AG04449 (cell line): ENCODE measurements at regions of chr11 and their contacts with region 1.

Region 1: GRCh38 chr11:18721561-18722292 is 4.3 kb downstream of the IGSF22 start:
- DNase-seq: no peak
- H3K4me3 ChIP-seq: peak overlapping the region; percentile 62
- CTCF ChIP-seq: peak; percentile 65

Region 2: GRCh38 chr11:18540207-18541009 is 181.3 kb before region 1 on chr11:
- CTCF ChIA-PET with region 1: interaction called, 24 read pairs
- POLR2A ChIA-PET with region 1: no interaction called
- DNase-seq: no peak
- H3K4me3 ChIP-seq: no peak overlapping the region
- CTCF ChIP-seq: peak; percentile 14

Region 3: DNA sequence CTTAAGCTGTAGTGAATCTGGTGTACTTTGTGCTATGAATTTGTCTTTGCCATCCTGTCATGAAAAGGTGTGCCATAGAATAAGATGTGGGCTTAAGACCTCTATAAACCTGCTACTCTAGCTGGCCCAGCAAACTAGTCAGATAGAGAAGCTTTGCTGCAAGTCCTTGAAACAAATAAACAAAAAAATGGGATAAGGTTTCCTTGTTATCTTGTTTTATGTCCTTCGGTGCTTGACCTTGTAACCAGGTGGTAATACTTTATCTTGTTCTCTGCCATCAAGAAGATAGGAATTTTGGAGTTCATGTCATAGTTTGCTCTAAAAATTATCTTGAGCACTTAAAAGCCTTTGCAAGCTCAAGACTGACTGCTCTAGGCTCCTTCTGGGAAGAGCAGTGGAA is 37.5 kb before region 1 on chr11:
- CTCF ChIA-PET with region 1: no interaction called
- POLR2A ChIA-PET with region 1: no interaction called
- DNase-seq: no peak
- H3K4me3 ChIP-seq: no peak overlapping the region
- CTCF ChIP-seq: no peak

Region 4: GRCh38 chr11:18698341-18699268 is 23.1 kb before region 1 on chr11 and contains the start of gene TMEM86A:
- CTCF ChIA-PET with region 1: interaction called, 18 read pairs
- POLR2A ChIA-PET with region 1: no interaction called
- DNase-seq: no peak
- H3K4me3 ChIP-seq: peak within 1 kb of the TSS; percentile 61
- CTCF ChIP-seq: no peak

Region 5: GRCh38 chr11:18731949-18732821 is 10.5 kb after region 1 on chr11:
- CTCF ChIA-PET with region 1: interaction called, 132 read pairs
- POLR2A ChIA-PET with region 1: no interaction called
- DNase-seq: no peak
- H3K4me3 ChIP-seq: no peak overlapping the region
- CTCF ChIP-seq: peak; percentile 87

Region 6: GRCh38 chr11:18765554-18765953 is 43.8 kb after region 1 on chr11:
- CTCF ChIA-PET with region 1: interaction called, 10 read pairs
- POLR2A ChIA-PET with region 1: no interaction called
- DNase-seq: no peak
- H3K4me3 ChIP-seq: no peak overlapping the region
- CTCF ChIP-seq: no peak

Region 7: GRCh38 chr11:19013181-19013857 is 291.6 kb after region 1 on chr11:
- CTCF ChIA-PET with region 1: no interaction called
- POLR2A ChIA-PET with region 1: no interaction called
- DNase-seq: no peak
- H3K4me3 ChIP-seq: no peak overlapping the region
- CTCF ChIP-seq: no peak

Region 8: DNA sequence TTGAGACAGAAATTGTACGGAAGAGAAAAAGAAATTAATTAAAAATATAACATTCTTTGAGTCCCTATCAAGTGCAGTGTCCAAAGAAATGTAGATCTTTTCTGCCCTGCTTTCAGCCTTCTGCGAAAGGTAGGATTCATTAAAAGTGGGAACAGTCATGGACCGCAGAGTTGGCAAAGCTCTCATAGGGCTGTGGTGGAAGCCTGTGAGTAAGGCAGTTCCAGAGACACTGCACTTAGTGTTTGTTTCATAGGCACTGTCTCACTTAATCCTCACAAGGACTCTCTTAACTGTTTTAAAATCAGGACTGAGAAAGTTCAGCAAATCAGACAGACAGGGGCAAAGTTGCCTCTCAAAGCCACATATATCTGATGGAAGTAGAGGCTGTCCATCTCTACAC is 333.3 kb after region 1 on chr11:
- CTCF ChIA-PET with region 1: no interaction called
- POLR2A ChIA-PET with region 1: no interaction called
- DNase-seq: no peak
- H3K4me3 ChIP-seq: no peak overlapping the region
- CTCF ChIP-seq: no peak

Region 9: DNA sequence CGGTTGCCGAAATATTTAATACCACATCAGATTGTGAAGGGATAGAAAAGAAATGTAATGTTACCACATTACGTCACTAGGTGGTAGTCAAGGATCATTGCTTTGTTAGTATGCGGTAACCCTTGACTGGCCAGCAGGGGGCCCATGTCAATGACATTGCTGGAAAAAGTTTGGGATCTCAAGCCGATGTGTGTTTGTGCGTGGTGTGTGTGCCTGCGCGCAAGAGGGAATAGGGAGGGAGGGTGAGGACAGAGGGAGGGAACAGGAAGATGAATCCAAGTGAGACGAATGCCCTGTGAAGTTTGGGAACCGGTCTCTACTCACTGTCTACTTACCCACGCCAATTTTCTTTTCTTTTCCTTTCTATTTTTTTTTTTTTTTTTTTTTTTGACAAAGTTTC is 349.5 kb after region 1 on chr11:
- CTCF ChIA-PET with region 1: no interaction called
- POLR2A ChIA-PET with region 1: no interaction called
- DNase-seq: peak; percentile 40
- H3K4me3 ChIP-seq: peak overlapping the region; percentile 44; the same call in 1 of the 2 replicates
- CTCF ChIP-seq: peak; percentile 96